Naive thymus-derived CD8-positive, alpha-beta T cell (primary cell): ENCODE measurements at regions of chr12 and their contacts with region 1.

Region 1: GRCh38 chr12:110563702-110564640 is 19.1 kb downstream of the PPTC7 start:
- DNase-seq: no peak
- ATAC-seq: no peak
- H3K4me3 Mint-ChIP-seq: peak overlapping the region in 6 of 10 donors; percentile 0 to 35 (median 16)
- H3K27ac Mint-ChIP-seq: peak overlapping the region; percentile 54 to 99 (median 92)
- H3K4me1 Mint-ChIP-seq: peaks cover 36 to 89% (median 79%) of the 10 kb centered on the region in 4 donors
- H3K27me3 Mint-ChIP-seq: no peaks in the 10 kb centered on the region

Region 2: DNA sequence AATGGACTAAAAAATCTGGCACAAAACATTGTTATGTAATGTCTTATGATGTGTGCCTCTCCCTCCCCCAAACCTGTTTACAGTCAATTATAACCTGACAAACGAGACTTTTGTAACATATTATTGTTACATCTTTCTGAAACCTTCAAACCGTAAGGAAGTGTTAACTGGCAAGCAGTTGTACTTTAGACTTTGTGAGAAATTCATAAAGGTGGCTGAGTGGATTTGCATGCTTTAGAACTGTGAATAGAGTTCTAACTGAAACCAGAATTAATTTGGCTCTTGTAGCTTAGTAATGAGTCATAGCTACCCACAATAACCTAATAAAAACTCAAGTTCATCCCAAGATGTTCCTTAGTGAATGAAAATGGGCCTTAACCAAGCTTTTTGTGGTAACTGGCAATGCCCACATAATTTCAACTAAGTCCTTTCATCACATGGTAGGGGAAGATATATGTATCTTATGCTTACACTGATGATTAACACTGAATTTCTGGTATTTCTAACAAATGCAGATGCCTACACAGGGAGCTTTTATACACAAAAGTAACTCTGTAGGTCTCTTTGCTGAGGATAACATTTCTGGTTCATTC is 32.1 kb before region 1 on chr12:
- POLR2A ChIA-PET with region 1: no interaction called
- DNase-seq: no peak
- ATAC-seq: peak in 1 of 2 donors; percentile 29
- H3K4me3 Mint-ChIP-seq: no peak overlapping the region
- H3K27ac Mint-ChIP-seq: peak overlapping the region in 6 of 10 donors; percentile 11 to 68 (median 27)
- H3K4me1 Mint-ChIP-seq: peaks cover 0 to 7% (median 7%) of the 10 kb centered on the region in 4 donors
- H3K27me3 Mint-ChIP-seq: no peaks in the 10 kb centered on the region

Region 3: GRCh38 chr12:110577717-110578521 is 13.9 kb after region 1 on chr12:
- POLR2A ChIA-PET with region 1: interaction called, 17 read pairs
- DNase-seq: peak in 2 of 10 donors; percentile 6 to 30
- ATAC-seq: peak; percentile 24 to 38
- H3K4me3 Mint-ChIP-seq: peak overlapping the region; percentile 44 to 97 (median 93)
- H3K27ac Mint-ChIP-seq: peak overlapping the region; percentile 53 to 95 (median 88)
- H3K4me1 Mint-ChIP-seq: peaks cover 24 to 85% (median 69%) of the 10 kb centered on the region in 4 donors
- H3K27me3 Mint-ChIP-seq: no peaks in the 10 kb centered on the region

Region 4: DNA sequence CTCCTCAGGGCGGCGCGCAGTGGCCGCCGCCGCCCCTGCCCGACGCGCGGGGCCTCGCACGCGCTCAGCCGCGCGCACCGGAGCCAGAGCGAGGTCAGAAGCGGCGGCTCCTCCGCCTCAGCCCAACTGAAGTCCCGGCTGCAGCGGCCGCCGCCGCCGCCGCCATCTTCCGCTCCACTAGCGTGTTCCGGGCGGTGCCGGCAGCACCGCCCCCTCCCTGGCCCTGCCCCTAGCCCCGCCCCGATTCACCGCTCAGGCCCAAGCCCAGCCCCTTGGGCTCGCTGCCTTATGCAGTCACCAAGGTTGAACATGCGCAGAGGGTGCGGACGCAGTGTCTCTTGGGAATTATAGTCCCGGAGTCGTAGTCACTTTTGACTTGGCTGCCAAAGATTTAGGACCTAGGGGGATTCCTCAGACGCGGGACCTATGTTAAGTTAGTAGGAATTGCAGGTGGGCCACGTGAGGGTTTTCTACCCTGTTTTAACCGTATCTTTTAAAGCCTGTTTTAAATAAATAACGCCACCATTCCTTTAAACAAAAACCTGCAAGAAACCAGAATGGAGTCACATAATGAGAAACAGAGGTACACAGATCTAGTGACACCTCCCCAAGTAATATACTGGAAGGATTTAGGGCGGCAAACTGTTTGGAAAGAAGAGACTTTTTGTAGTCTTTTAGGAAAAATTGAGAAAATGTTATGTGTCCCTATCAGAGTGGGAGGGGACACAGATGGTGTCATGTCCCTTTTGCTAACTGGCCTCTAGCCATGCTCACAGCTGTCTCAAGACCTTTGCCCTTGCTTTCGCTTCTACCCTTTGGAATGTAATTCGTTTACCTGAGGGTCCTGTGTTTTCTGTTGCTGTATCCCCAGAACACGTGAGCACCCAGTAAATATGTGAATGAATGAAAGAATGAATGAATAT is 19.4 kb after region 1 on chr12 and contains the start of gene PPTC7:
- POLR2A ChIA-PET with region 1: interaction called, 22 read pairs
- DNase-seq: peak; percentile 86 to 98 (median 94)
- ATAC-seq: peak; percentile 89 to 94
- H3K4me3 Mint-ChIP-seq: peak within 1 kb of the TSS; percentile 89 to 97 (median 94)
- H3K27ac Mint-ChIP-seq: peak within 1 kb of the TSS; percentile 90 to 98 (median 95)
- H3K4me1 Mint-ChIP-seq: peaks cover 16 to 67% (median 63%) of the 10 kb centered on the region in 4 donors
- H3K27me3 Mint-ChIP-seq: no peaks in the 10 kb centered on the region
- polyA plus RNA-seq, gene PPTC7: 7.6 to 10.2 (median 9.6) TPM

Region 5: GRCh38 chr12:110718222-110718908 is 154.4 kb after region 1 on chr12:
- POLR2A ChIA-PET with region 1: no interaction called
- DNase-seq: no peak
- ATAC-seq: no peak
- H3K4me3 Mint-ChIP-seq: no peak overlapping the region
- H3K27ac Mint-ChIP-seq: peak overlapping the region in 8 of 10 donors; percentile 20 to 75 (median 29)
- H3K4me1 Mint-ChIP-seq: peaks cover 0 to 14% (median 3%) of the 10 kb centered on the region in 4 donors
- H3K27me3 Mint-ChIP-seq: no peaks in the 10 kb centered on the region